Calu3 (cell line): ENCODE measurements at regions of chr3 and their contacts with region 1.

Region 1: DNA sequence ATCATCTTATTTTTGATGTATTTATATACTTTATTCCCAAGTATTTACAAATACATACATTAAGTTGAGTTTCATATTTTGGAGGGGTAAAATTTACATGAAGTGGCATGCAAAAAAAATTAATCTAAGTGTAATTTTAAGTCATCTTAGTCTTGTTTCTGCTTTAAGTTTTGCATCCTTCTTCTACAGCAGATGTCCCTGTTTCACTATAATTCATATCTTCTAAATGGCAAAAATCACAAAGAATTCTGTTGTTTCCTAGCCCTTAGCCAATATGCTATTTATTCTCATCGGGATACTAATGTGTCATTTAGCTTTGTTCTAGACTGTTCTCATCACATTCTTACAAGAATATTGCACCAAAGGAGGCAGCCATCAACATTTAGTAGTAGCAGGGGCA is 831.9 kb downstream of the GBE1 start:
- DNase-seq: no peak
- H3K4me3 Mint-ChIP-seq: no peak overlapping the region
- H3K27ac Mint-ChIP-seq: no peak overlapping the region
- H3K4me1 Mint-ChIP-seq: no peaks in the 10 kb centered on the region
- H3K27me3 Mint-ChIP-seq: no peaks in the 10 kb centered on the region
- CTCF ChIP-seq: no peak

Region 2: DNA sequence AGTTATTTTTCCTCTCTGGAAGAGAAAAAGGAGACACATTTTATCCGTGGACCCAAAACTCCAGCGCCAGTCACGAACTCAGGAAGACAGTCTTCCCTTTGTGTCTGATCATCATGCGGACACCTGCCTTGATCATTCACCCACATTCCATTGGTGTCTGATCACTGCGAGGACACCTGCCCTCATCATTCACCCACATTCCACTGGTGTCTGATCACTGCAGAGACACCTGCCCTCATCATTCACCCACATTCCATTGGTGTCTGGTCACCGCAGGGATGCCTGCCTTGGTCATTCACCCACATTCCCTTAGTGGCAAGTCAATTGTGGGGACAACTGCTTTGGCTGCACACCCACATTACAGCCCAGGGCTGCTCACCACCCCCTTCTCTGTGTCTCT is 1310.7 kb before region 1 on chr3:
- CTCF ChIA-PET with region 1: no interaction called
- intact Hi-C with region 1: loop called (anchors 10 kb)
- DNase-seq: no peak
- H3K4me3 Mint-ChIP-seq: no peak overlapping the region
- H3K27ac Mint-ChIP-seq: no peak overlapping the region
- H3K4me1 Mint-ChIP-seq: no peaks in the 10 kb centered on the region
- H3K27me3 Mint-ChIP-seq: no peaks in the 10 kb centered on the region
- CTCF ChIP-seq: no peak

Region 3: GRCh38 chr3:80682235-80682634 is 247.3 kb before region 1 on chr3:
- CTCF ChIA-PET with region 1: no interaction called
- intact Hi-C with region 1: no loop called
- DNase-seq: no peak
- H3K4me3 Mint-ChIP-seq: no peak overlapping the region
- H3K27ac Mint-ChIP-seq: no peak overlapping the region
- H3K4me1 Mint-ChIP-seq: no peaks in the 10 kb centered on the region
- H3K27me3 Mint-ChIP-seq: no peaks in the 10 kb centered on the region
- CTCF ChIP-seq: no peak